ENCODE measurements at regions of chr6 and their contacts with region 1.

Region 1: DNA sequence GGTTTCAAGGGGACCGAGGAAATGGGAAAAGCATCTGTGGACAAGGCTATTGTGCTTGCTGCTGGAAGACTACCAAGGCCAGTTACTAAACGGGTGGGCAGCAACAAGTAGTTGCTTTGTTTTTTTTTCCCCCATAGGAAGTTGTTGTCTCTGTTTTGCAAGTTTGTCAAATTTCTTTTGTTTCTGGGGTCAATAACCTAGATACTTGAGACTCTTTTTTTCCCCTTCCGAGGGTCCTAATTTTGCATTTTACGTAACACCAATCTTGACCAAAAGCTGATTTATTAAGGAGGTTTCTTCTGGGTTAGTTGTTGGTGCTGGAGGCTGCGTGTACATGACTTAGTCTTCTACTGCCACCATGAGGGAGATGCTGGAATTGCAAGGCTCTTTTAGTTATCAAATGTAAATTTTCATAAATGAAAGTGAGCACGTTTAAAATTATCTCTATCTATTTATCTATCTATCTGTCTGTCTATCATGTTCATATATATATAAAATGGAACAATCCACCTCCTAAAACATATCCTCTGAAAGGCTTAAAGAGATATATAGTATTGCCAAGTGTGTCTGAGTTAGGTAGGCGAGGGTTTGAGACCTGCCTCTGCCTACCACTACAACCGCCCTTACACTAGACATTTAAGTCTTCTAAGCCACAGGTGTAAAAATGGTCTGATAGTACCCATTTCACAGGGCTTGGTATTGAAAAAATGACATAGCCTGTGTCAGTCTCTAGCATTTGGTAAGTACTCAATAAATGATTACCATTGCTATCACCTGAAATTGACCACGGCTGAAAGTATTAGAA is 60.2 kb downstream of the GCLC start:
- DNase-seq: peak; percentile 43
- H3K4me3 ChIP-seq: no peak overlapping the region
- H3K27ac ChIP-seq: no peak overlapping the region
- H3K4me1 ChIP-seq: no peaks in the 10 kb centered on the region
- H3K27me3 ChIP-seq: no peaks in the 10 kb centered on the region
- CTCF ChIP-seq: peak; percentile 93 to 96

Region 2: DNA sequence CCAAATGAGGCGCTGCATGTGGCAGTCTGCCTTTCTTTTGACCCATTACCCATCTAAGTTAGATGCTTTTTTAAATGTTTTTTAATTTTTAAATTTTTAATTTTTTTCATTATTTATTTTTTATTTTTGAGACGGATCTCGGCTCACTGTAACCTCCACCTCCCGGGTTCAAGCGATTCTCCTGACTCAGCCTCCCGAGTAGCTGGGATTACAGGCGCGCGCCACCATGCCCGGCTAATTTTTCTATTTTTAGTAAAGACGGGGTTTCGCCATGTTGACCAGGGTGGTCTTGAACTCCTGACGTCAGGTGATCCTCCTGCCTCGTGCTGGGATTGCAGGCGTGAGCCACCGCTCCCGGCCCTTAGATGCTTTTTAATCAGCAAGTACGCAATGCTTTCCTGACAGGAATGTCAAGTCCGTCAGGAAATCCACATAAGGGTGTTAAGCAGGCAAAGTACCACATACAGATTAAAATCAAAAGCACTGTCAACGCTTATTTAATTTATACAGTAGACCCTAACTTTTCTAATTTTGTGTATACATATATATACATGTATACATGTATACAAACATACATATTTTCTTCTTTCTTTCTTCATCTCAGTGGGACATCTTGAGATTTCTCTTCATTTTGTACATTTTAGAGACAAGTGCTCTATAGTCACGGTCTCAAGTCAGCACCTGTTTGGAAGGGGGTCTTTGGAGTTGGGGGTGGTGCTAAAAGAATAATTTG is 488.6 kb before region 1 on chr6:
- CTCF ChIA-PET with region 1: no interaction called
- dilution Hi-C with region 1: no loop called
- in situ Hi-C with region 1: no loop called
- intact Hi-C with region 1: loop called (anchors 2 kb)
- DNase-seq: peak; percentile 81
- H3K4me3 ChIP-seq: peak overlapping the region in 1 of 3 experiments; percentile 14
- H3K27ac ChIP-seq: no peak overlapping the region
- H3K4me1 ChIP-seq: peaks cover 17% of the 10 kb centered on the region
- H3K27me3 ChIP-seq: no peaks in the 10 kb centered on the region
- CTCF ChIP-seq: no peak

Region 3: GRCh38 chr6:53294095-53294494 is 190.6 kb before region 1 on chr6:
- CTCF ChIA-PET with region 1: no interaction called
- dilution Hi-C with region 1: no loop called
- in situ Hi-C with region 1: no loop called
- intact Hi-C with region 1: loop called (anchors 1 kb)
- DNase-seq: no peak
- H3K4me3 ChIP-seq: no peak overlapping the region
- H3K27ac ChIP-seq: no peak overlapping the region
- H3K4me1 ChIP-seq: peaks cover 16% of the 10 kb centered on the region
- H3K27me3 ChIP-seq: no peaks in the 10 kb centered on the region
- CTCF ChIP-seq: peak in 1 of 2 donors; percentile 37

Region 4: DNA sequence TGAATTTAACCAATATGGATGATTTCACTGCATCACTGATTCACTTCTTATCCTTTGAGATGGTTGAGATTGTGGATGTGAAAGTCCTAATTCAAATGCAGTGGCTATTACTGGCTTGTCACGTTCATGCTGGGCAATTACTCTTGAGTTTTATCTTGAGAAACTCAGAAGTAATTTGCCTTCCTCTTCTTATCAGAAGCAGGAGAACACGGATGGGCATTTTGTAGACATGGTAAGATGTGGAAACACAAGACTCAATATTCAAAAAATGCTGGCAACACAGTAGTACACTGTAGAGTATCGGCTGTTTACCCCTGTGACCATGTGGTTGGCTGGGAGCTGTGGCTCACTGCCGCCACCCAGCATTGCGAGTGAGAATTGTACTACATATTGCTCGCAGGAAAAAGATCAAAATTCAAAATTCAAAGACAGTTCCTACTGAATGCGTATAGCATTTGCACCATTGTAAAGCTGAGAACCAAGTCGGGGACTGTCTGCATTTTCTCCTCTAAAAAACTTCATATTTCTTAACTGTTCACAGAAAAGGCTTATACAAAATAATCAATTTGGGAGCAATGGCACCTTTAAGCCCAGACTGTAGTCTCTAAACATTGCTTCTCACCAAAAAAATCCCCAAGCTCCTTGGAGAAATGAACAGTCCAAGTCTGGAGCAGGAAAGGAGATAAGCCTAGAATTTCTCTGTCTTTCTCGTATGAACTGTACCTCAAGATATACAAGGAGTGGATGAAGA is 74.0 kb before region 1 on chr6:
- CTCF ChIA-PET with region 1: no interaction called
- dilution Hi-C with region 1: no loop called
- in situ Hi-C with region 1: no loop called
- intact Hi-C with region 1: loop called (anchors 2 kb)
- DNase-seq: peak; percentile 13
- H3K4me3 ChIP-seq: no peak overlapping the region
- H3K27ac ChIP-seq: no peak overlapping the region
- H3K4me1 ChIP-seq: no peaks in the 10 kb centered on the region
- H3K27me3 ChIP-seq: peaks cover 3% of the 10 kb centered on the region
- CTCF ChIP-seq: peak; percentile 44 to 73

Region 5: DNA sequence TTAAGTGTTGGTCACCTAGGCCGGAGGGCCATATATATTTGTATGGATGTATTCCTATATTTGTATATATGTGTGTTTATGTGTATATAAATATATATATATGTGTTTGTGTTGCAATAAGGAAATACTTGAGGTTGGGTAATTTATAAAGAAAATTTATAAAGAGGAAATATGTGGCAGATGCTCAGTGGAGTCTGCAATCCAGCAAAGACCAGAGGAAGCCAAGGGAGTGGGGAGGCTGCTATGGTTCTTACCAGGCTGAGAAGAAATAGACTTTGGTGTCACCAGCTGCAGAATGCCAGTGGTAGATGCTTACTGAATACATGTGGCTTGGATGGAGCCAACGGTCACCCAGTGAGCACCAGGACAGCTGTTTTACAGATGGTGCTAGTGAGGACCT is 38.5 kb before region 1 on chr6:
- CTCF ChIA-PET with region 1: no interaction called
- dilution Hi-C with region 1: no loop called
- in situ Hi-C with region 1: no loop called
- intact Hi-C with region 1: no loop called
- DNase-seq: no peak
- H3K4me3 ChIP-seq: no peak overlapping the region
- H3K27ac ChIP-seq: no peak overlapping the region
- H3K4me1 ChIP-seq: no peaks in the 10 kb centered on the region
- H3K27me3 ChIP-seq: no peaks in the 10 kb centered on the region
- CTCF ChIP-seq: no peak

Region 6: GRCh38 chr6:53956068-53956711 is 471.5 kb after region 1 on chr6:
- CTCF ChIA-PET with region 1: no interaction called
- dilution Hi-C with region 1: no loop called
- in situ Hi-C with region 1: loop called in 1 of 2 experiments (anchors 25 kb)
- intact Hi-C with region 1: no loop called
- DNase-seq: peak; percentile 54
- H3K4me3 ChIP-seq: no peak overlapping the region
- H3K27ac ChIP-seq: no peak overlapping the region
- H3K4me1 ChIP-seq: no peaks in the 10 kb centered on the region
- H3K27me3 ChIP-seq: no peaks in the 10 kb centered on the region
- CTCF ChIP-seq: peak; percentile 54 to 82

Measured in mammary epithelial cell (primary cell).